Left colon (tissue), 2 donors: ENCODE measurements at regions of chr2 and their contacts with region 1.

Region 1: GRCh38 chr2:101012706-101013181 is 10.7 kb downstream of the RPL31 start:
- DNase-seq: no peak
- ATAC-seq: peak; percentile 24

Region 2: DNA sequence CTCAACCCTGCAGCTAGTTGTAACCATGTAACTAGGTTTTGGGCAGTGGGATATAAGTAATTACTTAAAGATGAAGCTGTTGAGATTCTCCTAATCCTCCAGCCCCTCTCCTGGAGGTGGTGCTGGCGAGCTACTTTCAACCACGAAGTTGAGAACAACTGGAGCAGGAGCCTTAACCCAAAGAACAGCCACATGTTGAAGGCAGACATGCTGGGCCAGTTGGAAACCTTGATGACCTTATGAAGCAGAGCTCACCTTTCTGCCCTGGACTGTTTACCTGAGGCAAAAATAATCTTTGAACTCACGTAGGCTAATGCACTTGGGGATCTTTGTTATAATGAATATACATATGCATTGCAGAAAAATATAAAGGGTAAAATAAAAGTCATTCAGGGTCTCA is 282.4 kb before region 1 on chr2:
- intact Hi-C with region 1: no loop called
- DNase-seq: peak; percentile 50 to 72
- ATAC-seq: peak; percentile 95

Region 3: GRCh38 chr2:101151141-101151858 is 138.6 kb after region 1 on chr2 and contains the start of gene TBC1D8:
- intact Hi-C with region 1: loop called in 1 of 2 experiments (anchors 5 kb)
- DNase-seq: peak; percentile 87 to 90
- ATAC-seq: peak; percentile 89
- total RNA-seq, gene TBC1D8: 16.1 to 37.3 TPM

Region 4: GRCh38 chr2:101205521-101205998 is 192.8 kb after region 1 on chr2:
- intact Hi-C with region 1: loop called in 1 of 2 experiments (anchors 5 kb)
- DNase-seq: peak; percentile 39 to 42
- ATAC-seq: peak; percentile 96